PC-3 (cell line): ENCODE measurements at regions of chr15 and their contacts with region 1.

Region 1: DNA sequence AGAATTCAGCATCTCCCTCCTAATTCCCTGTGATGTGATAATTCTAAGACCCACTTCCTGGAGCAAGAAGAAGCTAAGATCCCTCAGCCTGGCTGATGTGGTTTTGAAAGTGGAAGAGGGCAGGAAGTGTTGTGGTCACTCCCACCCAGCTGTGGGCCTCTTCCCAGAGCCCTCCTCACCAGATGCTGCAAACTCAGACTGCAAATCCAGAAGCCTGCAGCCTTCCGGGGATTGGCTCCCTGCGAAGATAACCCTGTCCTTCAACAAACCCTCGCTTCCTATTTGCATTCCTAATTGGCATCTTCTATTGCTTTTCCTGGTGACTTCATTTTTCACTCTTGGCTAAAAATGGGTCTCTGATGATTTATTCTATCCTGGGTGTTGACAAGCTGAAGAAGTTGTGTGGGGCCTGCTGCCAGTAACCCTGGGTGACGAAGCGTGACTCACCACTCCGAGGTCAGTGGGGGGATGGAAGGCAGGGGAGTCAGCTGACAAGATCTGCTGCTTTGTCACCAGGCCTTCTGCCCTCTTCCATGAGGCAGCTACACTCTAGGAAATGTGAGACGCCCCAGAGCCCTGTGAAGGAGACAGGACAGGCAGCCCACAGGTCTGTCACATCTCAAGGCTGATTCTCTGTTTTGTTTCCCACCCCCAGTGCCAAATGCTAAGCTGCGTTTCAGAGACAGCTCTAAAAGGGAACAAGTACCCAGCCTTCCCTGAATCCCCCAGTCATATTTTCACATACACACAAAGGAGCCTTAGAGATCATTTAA is 99.7 kb upstream of the LIPC start:
- DNase-seq: peak; percentile 97
- ATAC-seq: peak; percentile 85
- H3K4me3 ChIP-seq: peak overlapping the region; percentile 43
- H3K27ac ChIP-seq: peak overlapping the region; percentile 100
- H3K4me1 ChIP-seq: peaks cover 43% of the 10 kb centered on the region
- H3K27me3 ChIP-seq: no peaks in the 10 kb centered on the region
- CTCF ChIP-seq: no peak

Region 2: DNA sequence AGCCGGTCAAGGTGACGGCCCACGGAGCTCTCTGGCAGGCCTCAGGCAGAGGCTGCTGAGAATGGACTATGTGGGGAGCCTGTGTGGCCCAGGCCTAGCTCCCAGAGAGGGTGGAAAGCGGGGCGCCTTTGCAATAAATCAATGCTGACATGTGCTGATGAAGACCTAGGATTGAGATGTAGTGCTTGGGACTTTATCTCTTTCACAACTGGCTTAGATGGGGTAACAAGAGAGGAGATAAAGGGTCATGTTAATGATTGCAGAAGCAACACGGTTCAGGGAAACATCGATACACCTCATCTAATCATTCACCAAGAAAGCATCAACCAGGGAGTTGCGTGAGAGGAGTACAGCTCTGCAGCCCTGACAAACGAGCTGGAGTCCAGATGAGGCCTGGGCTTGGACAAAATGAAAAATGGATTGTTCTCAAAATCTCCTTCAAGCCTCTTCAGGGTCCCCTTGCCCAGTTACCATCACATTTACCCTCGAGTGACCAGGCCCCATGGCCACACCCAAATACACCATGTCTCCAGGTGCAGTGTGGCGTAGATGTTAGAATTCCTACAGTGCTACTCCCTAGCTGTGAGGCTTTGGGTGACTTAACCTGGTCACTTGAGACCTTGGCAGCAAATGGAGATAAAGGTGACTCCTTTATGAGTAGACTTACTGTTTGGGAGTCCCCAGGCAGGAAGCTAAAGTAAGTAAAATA is 46.7 kb before region 1 on chr15:
- CTCF ChIA-PET with region 1: no interaction called
- POLR2A ChIA-PET with region 1: no interaction called
- intact Hi-C with region 1: loop called (anchors 5 kb)
- DNase-seq: peak; percentile 38
- ATAC-seq: peak; percentile 45
- H3K4me3 ChIP-seq: no peak overlapping the region
- H3K27ac ChIP-seq: no peak overlapping the region
- H3K4me1 ChIP-seq: peaks cover 10% of the 10 kb centered on the region
- H3K27me3 ChIP-seq: no peaks in the 10 kb centered on the region
- CTCF ChIP-seq: no peak

Region 3: GRCh38 chr15:58369261-58369701 is 37.2 kb after region 1 on chr15:
- CTCF ChIA-PET with region 1: interaction called, 3 read pairs
- POLR2A ChIA-PET with region 1: no interaction called
- intact Hi-C with region 1: loop called (anchors 1 kb)
- DNase-seq: peak; percentile 63
- ATAC-seq: peak; percentile 94
- H3K4me3 ChIP-seq: peak overlapping the region; percentile 42; the same call in 1 of the 2 replicates
- H3K27ac ChIP-seq: peak overlapping the region; percentile 55
- H3K4me1 ChIP-seq: peaks cover 35% of the 10 kb centered on the region
- H3K27me3 ChIP-seq: no peaks in the 10 kb centered on the region
- CTCF ChIP-seq: no peak

Region 4: DNA sequence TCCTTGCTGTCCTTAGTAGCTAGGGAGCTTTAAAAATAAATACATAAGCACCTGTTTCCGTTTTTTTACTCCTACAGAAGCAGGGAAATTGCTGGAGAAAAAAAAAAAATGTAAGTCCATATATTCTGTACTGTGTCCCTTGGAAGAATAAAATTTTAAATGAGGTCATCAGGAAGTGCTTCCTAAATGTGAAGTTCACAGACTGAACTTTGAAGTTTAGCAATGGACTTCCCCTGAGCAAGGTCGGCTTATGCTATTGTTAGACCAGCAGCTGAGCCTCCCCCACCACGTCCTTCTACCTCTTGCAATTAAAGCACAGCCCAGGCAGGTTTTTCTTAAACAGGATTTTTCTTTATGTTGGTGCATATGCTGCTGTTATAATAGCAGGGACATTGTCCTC is 126.0 kb after region 1 on chr15:
- CTCF ChIA-PET with region 1: no interaction called
- POLR2A ChIA-PET with region 1: no interaction called
- intact Hi-C with region 1: no loop called
- DNase-seq: no peak
- ATAC-seq: no peak; the same call in 1 of the 2 replicates
- H3K4me3 ChIP-seq: peak overlapping the region; percentile 20; the same call in 1 of the 2 replicates
- H3K27ac ChIP-seq: peak overlapping the region; percentile 96
- H3K4me1 ChIP-seq: peaks cover 58% of the 10 kb centered on the region
- H3K27me3 ChIP-seq: no peaks in the 10 kb centered on the region
- CTCF ChIP-seq: no peak

Region 5: GRCh38 chr15:58749532-58750337 is 417.6 kb after region 1 on chr15 and contains the start of gene ADAM10:
- CTCF ChIA-PET with region 1: no interaction called
- POLR2A ChIA-PET with region 1: no interaction called
- intact Hi-C with region 1: loop called (anchors 2 kb)
- DNase-seq: peak; percentile 98
- ATAC-seq: peak; percentile 93
- H3K4me3 ChIP-seq: peak within 1 kb of the TSS; percentile 80
- H3K27ac ChIP-seq: peak within 1 kb of the TSS; percentile 74
- H3K4me1 ChIP-seq: 0 out of 2 replicates have a peak, but pooled peaks cover 3% of the 10 kb centered on the region
- H3K27me3 ChIP-seq: no peaks in the 10 kb centered on the region
- CTCF ChIP-seq: no peak
- total RNA-seq, gene ADAM10: 91.3 and 96.8 TPM in 2 replicates